Caco-2 (cell line): ENCODE measurements at regions of chr13 and their contacts with region 1.

Region 1: DNA sequence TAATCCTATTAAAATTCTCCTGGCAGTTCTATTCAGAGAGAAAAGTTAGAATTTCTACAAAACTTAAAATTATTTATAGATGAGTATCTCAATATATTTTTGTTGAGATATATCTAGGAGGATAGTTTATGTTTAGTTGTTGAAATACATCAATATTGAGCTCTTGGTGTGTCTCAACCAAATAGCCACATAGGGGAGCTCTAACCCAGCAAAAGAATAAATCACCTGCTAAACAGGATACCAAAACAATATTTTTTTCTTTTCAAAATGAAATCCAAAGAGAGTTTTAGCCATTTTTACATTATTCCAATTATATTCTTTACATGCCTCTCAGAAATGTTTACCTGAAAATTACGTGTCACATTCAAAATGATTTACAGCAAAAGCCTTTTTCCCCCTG is 954.7 kb downstream of the SLITRK6 start:
- DNase-seq: peak in 1 of 2 experiments; percentile 30
- H3K4me3 ChIP-seq: no peak overlapping the region
- H3K4me3 Mint-ChIP-seq: no peak overlapping the region
- H3K27ac Mint-ChIP-seq: no peak overlapping the region
- H3K4me1 ChIP-seq: no peaks in the 10 kb centered on the region
- H3K4me1 Mint-ChIP-seq: no peaks in the 10 kb centered on the region
- H3K27me3 ChIP-seq: no peaks in the 10 kb centered on the region
- H3K27me3 Mint-ChIP-seq: no peaks in the 10 kb centered on the region
- CTCF ChIP-seq: peak; percentile 17 to 52

Region 2: DNA sequence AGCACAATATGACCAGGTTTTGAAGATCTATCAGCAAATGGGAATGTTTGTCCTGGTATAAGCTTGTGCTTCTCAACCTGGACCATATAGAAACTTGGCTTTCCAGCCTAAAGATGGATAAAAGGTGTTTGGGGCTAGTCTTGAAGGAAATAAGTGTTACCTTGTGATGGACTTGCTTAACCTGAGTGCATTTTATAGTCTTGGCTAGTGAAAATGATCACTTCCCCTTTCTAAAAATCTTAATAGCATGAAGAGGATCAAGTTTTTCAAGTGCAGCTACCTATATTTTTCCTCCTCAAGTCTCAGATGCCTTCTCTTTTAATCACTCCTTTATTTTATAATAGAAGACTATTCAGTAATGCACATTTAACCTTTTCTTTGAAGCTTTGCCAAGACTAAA is 42.4 kb before region 1 on chr13:
- CTCF ChIA-PET with region 1: no interaction called
- POLR2A ChIA-PET with region 1: no interaction called
- intact Hi-C with region 1: no loop called
- DNase-seq: no peak
- H3K4me3 ChIP-seq: no peak overlapping the region
- H3K4me3 Mint-ChIP-seq: no peak overlapping the region
- H3K27ac Mint-ChIP-seq: no peak overlapping the region
- H3K4me1 ChIP-seq: no peaks in the 10 kb centered on the region
- H3K4me1 Mint-ChIP-seq: no peaks in the 10 kb centered on the region
- H3K27me3 ChIP-seq: no peaks in the 10 kb centered on the region
- H3K27me3 Mint-ChIP-seq: peaks cover 8% of the 10 kb centered on the region
- CTCF ChIP-seq: no peak

Region 3: GRCh38 chr13:84870199-84870598 is 25.7 kb after region 1 on chr13:
- CTCF ChIA-PET with region 1: interaction called, 3 read pairs
- POLR2A ChIA-PET with region 1: no interaction called
- intact Hi-C with region 1: loop called (anchors 1 kb)
- DNase-seq: peak; percentile 34 to 40
- H3K4me3 ChIP-seq: no peak overlapping the region
- H3K4me3 Mint-ChIP-seq: no peak overlapping the region
- H3K27ac Mint-ChIP-seq: no peak overlapping the region
- H3K4me1 ChIP-seq: no peaks in the 10 kb centered on the region
- H3K4me1 Mint-ChIP-seq: no peaks in the 10 kb centered on the region
- H3K27me3 ChIP-seq: no peaks in the 10 kb centered on the region
- H3K27me3 Mint-ChIP-seq: peaks cover 3% of the 10 kb centered on the region
- CTCF ChIP-seq: peak; percentile 24 to 42

Region 4: GRCh38 chr13:84896128-84896527 is 51.7 kb after region 1 on chr13:
- CTCF ChIA-PET with region 1: no interaction called
- POLR2A ChIA-PET with region 1: no interaction called
- intact Hi-C with region 1: loop called (anchors 2 kb)
- DNase-seq: peak in 1 of 2 experiments; percentile 55
- H3K4me3 ChIP-seq: no peak overlapping the region
- H3K4me3 Mint-ChIP-seq: no peak overlapping the region
- H3K27ac Mint-ChIP-seq: no peak overlapping the region
- H3K4me1 ChIP-seq: no peaks in the 10 kb centered on the region
- H3K4me1 Mint-ChIP-seq: no peaks in the 10 kb centered on the region
- H3K27me3 ChIP-seq: no peaks in the 10 kb centered on the region
- H3K27me3 Mint-ChIP-seq: no peaks in the 10 kb centered on the region
- CTCF ChIP-seq: peak; percentile 55 to 83

Region 5: GRCh38 chr13:85806553-85807175 is 962.2 kb after region 1 on chr13:
- CTCF ChIA-PET with region 1: no interaction called
- POLR2A ChIA-PET with region 1: no interaction called
- intact Hi-C with region 1: loop called (anchors 2 kb)
- DNase-seq: peak in 1 of 2 experiments; percentile 59
- H3K4me3 ChIP-seq: no peak overlapping the region
- H3K4me3 Mint-ChIP-seq: no peak overlapping the region
- H3K27ac Mint-ChIP-seq: no peak overlapping the region
- H3K4me1 ChIP-seq: no peaks in the 10 kb centered on the region
- H3K4me1 Mint-ChIP-seq: no peaks in the 10 kb centered on the region
- H3K27me3 ChIP-seq: no peaks in the 10 kb centered on the region
- H3K27me3 Mint-ChIP-seq: no peaks in the 10 kb centered on the region
- CTCF ChIP-seq: peak; percentile 56 to 81

Region 6: DNA sequence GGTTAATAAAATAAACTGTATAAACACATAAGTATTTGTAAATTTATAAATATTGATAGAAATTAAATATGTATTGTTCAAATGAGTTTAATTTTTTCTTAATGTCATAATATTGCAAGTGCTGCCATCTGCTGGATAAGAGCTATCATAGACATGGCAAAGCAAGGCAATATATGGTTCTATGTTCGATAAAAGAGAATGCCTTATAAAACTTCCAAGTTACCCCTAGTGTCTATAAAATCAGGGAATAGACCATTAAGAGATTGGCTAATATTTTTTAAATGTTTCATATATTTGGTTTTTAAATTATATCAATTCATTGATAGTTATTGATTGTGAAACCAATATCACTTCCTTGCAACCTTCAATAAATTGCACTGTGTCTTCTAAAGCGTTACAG is 983.7 kb after region 1 on chr13:
- CTCF ChIA-PET with region 1: interaction called, 3 read pairs
- POLR2A ChIA-PET with region 1: no interaction called
- intact Hi-C with region 1: loop called (anchors 5 kb)
- DNase-seq: no peak
- H3K4me3 ChIP-seq: no peak overlapping the region
- H3K4me3 Mint-ChIP-seq: no peak overlapping the region
- H3K27ac Mint-ChIP-seq: no peak overlapping the region
- H3K4me1 ChIP-seq: no peaks in the 10 kb centered on the region
- H3K4me1 Mint-ChIP-seq: no peaks in the 10 kb centered on the region
- H3K27me3 ChIP-seq: no peaks in the 10 kb centered on the region
- H3K27me3 Mint-ChIP-seq: no peaks in the 10 kb centered on the region
- CTCF ChIP-seq: peak; percentile 65 to 79

Region 7: DNA sequence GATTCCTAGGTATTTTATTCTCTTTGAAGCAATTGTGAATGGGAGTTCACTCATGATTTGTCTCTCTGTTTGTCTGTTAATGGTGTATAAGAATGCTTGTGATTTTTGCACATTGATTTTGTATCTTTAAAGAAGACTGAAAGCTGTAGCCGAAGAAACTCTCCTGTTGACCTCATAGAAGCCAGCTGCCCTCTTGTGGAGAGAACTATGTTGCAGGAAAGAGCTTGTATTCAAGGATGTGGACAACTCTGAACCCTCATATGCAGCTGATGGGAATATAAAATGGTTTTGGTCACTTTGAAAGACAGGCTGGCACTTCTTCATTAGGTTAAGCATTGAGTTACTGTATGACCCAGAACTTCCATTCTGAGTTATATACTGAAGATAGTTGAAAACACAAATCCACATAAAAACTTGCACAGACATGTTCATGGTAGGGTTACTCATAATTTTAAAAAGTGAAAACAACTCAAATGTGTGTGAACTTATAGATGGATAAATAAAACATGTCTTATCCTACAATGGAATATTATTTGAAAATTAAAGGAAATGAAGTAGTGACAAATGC is 1020.6 kb after region 1 on chr13:
- CTCF ChIA-PET with region 1: no interaction called
- POLR2A ChIA-PET with region 1: no interaction called
- intact Hi-C with region 1: loop called (anchors 1 kb)
- DNase-seq: peak in 1 of 2 experiments; percentile 31
- H3K4me3 ChIP-seq: no peak overlapping the region
- H3K4me3 Mint-ChIP-seq: no peak overlapping the region
- H3K27ac Mint-ChIP-seq: no peak overlapping the region
- H3K4me1 ChIP-seq: no peaks in the 10 kb centered on the region
- H3K4me1 Mint-ChIP-seq: no peaks in the 10 kb centered on the region
- H3K27me3 ChIP-seq: no peaks in the 10 kb centered on the region
- H3K27me3 Mint-ChIP-seq: no peaks in the 10 kb centered on the region
- CTCF ChIP-seq: peak; percentile 25 to 75

Region 8: GRCh38 chr13:85896516-85897450 is 1052.3 kb after region 1 on chr13:
- CTCF ChIA-PET with region 1: no interaction called
- POLR2A ChIA-PET with region 1: no interaction called
- intact Hi-C with region 1: loop called (anchors 1 kb)
- DNase-seq: peak in 1 of 2 experiments; percentile 13
- H3K4me3 ChIP-seq: no peak overlapping the region
- H3K4me3 Mint-ChIP-seq: no peak overlapping the region
- H3K27ac Mint-ChIP-seq: no peak overlapping the region
- H3K4me1 ChIP-seq: no peaks in the 10 kb centered on the region
- H3K4me1 Mint-ChIP-seq: no peaks in the 10 kb centered on the region
- H3K27me3 ChIP-seq: no peaks in the 10 kb centered on the region
- H3K27me3 Mint-ChIP-seq: no peaks in the 10 kb centered on the region
- CTCF ChIP-seq: peak; percentile 21 to 26